B cell (primary cell): ENCODE measurements at regions of chr14 and their contacts with region 1.

Region 1: GRCh38 chr14:24332268-24332993 is 2.4 kb downstream of the ADCY4 start:
- DNase-seq: peak; percentile 91
- ATAC-seq: peak; percentile 95
- H3K4me3 ChIP-seq: peak overlapping the region in 4 of 5 experiments; percentile 37 to 67 (median 44)
- H3K4me3 Mint-ChIP-seq: peak overlapping the region; percentile 93
- H3K27ac ChIP-seq: no peak overlapping the region
- H3K27ac Mint-ChIP-seq: peak overlapping the region; percentile 76
- H3K4me1 ChIP-seq: peaks cover 39 to 43% of the 10 kb centered on the region in 2 donors
- H3K4me1 Mint-ChIP-seq: peaks cover 39% of the 10 kb centered on the region
- H3K27me3 ChIP-seq: peaks cover 0 to 33% (median 19%) of the 10 kb centered on the region in 4 experiments
- H3K27me3 Mint-ChIP-seq: peaks cover 17% of the 10 kb centered on the region
- CTCF ChIP-seq: peak; percentile 80

Region 2: GRCh38 chr14:24271134-24271833 is 61.1 kb before region 1 on chr14 and contains the start of gene RABGGTA:
- CTCF ChIA-PET with region 1: interaction called, 6 read pairs
- POLR2A ChIA-PET with region 1: no interaction called
- intact Hi-C with region 1: loop called (anchors 2 kb)
- DNase-seq: peak; percentile 98
- ATAC-seq: peak; percentile 87
- H3K4me3 ChIP-seq: peak within 1 kb of the TSS; percentile 45 to 96 (median 93)
- H3K4me3 Mint-ChIP-seq: peak within 1 kb of the TSS; percentile 94
- H3K27ac ChIP-seq: peak within 1 kb of the TSS; percentile 93 to 97
- H3K27ac Mint-ChIP-seq: peak within 1 kb of the TSS; percentile 94
- H3K4me1 ChIP-seq: peaks cover 32 to 39% of the 10 kb centered on the region in 2 donors
- H3K4me1 Mint-ChIP-seq: peaks cover 48% of the 10 kb centered on the region
- H3K27me3 ChIP-seq: no peaks in the 10 kb centered on the region
- H3K27me3 Mint-ChIP-seq: no peaks in the 10 kb centered on the region
- CTCF ChIP-seq: peak; percentile 75
- total RNA-seq, gene RABGGTA: 57.9 and 70.1 TPM in 2 replicates

Region 3: GRCh38 chr14:24310646-24311604 is 21.5 kb before region 1 on chr14 and contains the start of gene LTB4R:
- CTCF ChIA-PET with region 1: interaction called, 80 read pairs
- POLR2A ChIA-PET with region 1: interaction called, 7 read pairs
- intact Hi-C with region 1: loop called (anchors 1 kb)
- DNase-seq: peak; percentile 90
- ATAC-seq: peak; percentile 76
- H3K4me3 ChIP-seq: peak within 1 kb of the TSS; percentile 8 to 71 (median 57)
- H3K4me3 Mint-ChIP-seq: peak within 1 kb of the TSS; percentile 84
- H3K27ac ChIP-seq: peak within 1 kb of the TSS; percentile 65 to 83
- H3K27ac Mint-ChIP-seq: peak within 1 kb of the TSS; percentile 91
- H3K4me1 ChIP-seq: peaks cover 38 to 57% of the 10 kb centered on the region in 2 donors
- H3K4me1 Mint-ChIP-seq: peaks cover 61% of the 10 kb centered on the region
- H3K27me3 ChIP-seq: no peaks in the 10 kb centered on the region
- H3K27me3 Mint-ChIP-seq: no peaks in the 10 kb centered on the region
- CTCF ChIP-seq: peak; percentile 67
- total RNA-seq, gene LTB4R: 8.8 and 9.2 TPM in 2 replicates

Region 4: GRCh38 chr14:24366721-24367513 is 34.5 kb after region 1 on chr14:
- CTCF ChIA-PET with region 1: interaction called, 47 read pairs
- POLR2A ChIA-PET with region 1: interaction called, 3 read pairs
- intact Hi-C with region 1: loop called (anchors 1 kb)
- DNase-seq: peak; percentile 94
- ATAC-seq: peak; percentile 85
- H3K4me3 ChIP-seq: peak overlapping the region in 4 of 5 experiments; percentile 52 to 64 (median 60)
- H3K4me3 Mint-ChIP-seq: peak overlapping the region; percentile 92
- H3K27ac ChIP-seq: peak overlapping the region; percentile 59 to 70
- H3K27ac Mint-ChIP-seq: peak overlapping the region; percentile 92
- H3K4me1 ChIP-seq: peaks cover 30 to 39% of the 10 kb centered on the region in 2 donors
- H3K4me1 Mint-ChIP-seq: peaks cover 32% of the 10 kb centered on the region
- H3K27me3 ChIP-seq: peaks cover 0 to 32% (median 6%) of the 10 kb centered on the region in 4 experiments
- H3K27me3 Mint-ChIP-seq: peaks cover 10% of the 10 kb centered on the region
- CTCF ChIP-seq: no peak

Region 5: GRCh38 chr14:24442273-24443052 is 110.0 kb after region 1 on chr14 and contains the start of gene SDR39U1:
- CTCF ChIA-PET with region 1: interaction called, 650 read pairs
- POLR2A ChIA-PET with region 1: interaction called, 20 read pairs
- intact Hi-C with region 1: no loop called
- DNase-seq: peak; percentile 99
- ATAC-seq: peak; percentile 89
- H3K4me3 ChIP-seq: peak within 1 kb of the TSS; percentile 86 to 98 (median 94)
- H3K4me3 Mint-ChIP-seq: peak within 1 kb of the TSS; percentile 97
- H3K27ac ChIP-seq: peak within 1 kb of the TSS; percentile 96
- H3K27ac Mint-ChIP-seq: peak within 1 kb of the TSS; percentile 98
- H3K4me1 ChIP-seq: peaks cover 20 to 29% of the 10 kb centered on the region in 2 donors
- H3K4me1 Mint-ChIP-seq: peaks cover 48% of the 10 kb centered on the region
- H3K27me3 ChIP-seq: no peaks in the 10 kb centered on the region
- H3K27me3 Mint-ChIP-seq: no peaks in the 10 kb centered on the region
- CTCF ChIP-seq: no peak
- total RNA-seq, gene SDR39U1: 107 and 126 TPM in 2 replicates